Activated B cell treated with CpG ODN at 0.5 μM for 24 hours (primary cell): ENCODE measurements at regions of chr7 and their contacts with region 1.

Region 1: DNA sequence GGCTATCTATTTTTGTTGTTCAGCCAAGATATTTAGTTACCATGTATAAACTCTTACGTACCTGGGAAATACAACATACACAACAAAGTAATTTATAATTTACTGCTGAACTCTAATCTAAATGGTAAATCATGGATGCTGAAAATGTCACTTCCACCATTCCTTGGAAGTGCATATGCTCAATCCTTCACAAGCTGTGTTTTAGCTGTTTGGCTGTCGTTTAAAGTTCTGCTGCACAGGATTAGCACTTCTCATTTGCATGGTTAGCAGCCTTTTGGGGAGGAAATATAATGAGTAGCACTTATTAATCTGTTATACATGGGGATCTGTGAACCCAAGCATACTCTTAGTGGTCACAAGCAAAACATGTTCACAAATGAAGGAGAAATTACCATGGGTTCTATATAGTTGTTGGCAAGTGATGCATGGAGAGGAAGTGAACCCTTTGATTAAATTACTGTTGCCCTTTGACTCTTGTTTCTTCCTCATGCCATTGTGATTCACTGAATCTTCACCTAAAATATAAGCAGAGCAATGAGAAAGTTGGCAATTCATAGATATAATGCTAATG is 18.5 kb downstream of the PIK3CG start:
- DNase-seq: no peak
- ATAC-seq: peak; percentile 95
- H3K4me3 Mint-ChIP-seq: peak overlapping the region; percentile 58
- H3K27ac Mint-ChIP-seq: peak overlapping the region; percentile 61
- H3K4me1 Mint-ChIP-seq: peaks cover 45% of the 10 kb centered on the region
- H3K27me3 Mint-ChIP-seq: no peaks in the 10 kb centered on the region
- CTCF ChIP-seq: no peak

Region 2: DNA sequence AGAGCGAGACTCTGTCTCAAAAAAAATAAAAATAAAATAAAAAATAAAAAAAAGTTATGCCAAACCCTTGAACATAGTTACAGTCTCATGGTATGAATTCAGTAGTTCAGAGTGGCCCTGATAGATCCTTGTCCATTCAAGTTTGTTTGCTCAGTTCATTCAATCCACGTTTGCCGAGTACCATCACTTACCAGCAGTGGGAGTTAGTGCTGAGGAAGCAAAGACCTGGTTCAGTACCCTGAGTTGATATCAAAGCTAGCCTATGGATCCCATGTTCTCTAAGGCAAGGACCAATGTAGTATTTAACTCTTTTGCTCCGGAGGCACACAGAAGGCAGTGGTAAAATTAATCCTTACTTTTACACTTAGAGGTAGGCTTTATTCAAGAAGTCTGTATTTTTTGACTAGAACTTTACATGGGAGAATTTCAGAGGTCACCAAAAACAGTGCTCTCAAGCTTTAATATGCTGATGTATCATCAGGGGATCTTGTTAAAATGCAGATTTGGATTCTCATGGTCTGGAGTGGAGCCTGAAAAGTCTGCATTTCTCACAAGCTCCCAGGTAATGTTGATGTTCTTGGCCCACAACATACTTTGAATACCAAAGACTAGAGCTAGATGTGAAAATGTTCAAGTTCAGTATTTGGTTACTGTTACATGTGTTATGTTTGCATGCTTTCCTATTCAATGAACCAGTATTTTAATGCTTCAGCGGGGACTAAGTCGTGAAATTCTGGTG is 247.1 kb after region 1 on chr7:
- CTCF ChIA-PET with region 1: no interaction called
- POLR2A ChIA-PET with region 1: interaction called, 13 read pairs
- intact Hi-C with region 1: no loop called
- DNase-seq: no peak
- ATAC-seq: no peak
- H3K4me3 Mint-ChIP-seq: no peak overlapping the region
- H3K27ac Mint-ChIP-seq: no peak overlapping the region
- H3K4me1 Mint-ChIP-seq: peaks cover 11% of the 10 kb centered on the region
- H3K27me3 Mint-ChIP-seq: no peaks in the 10 kb centered on the region
- CTCF ChIP-seq: no peak

Region 3: GRCh38 chr7:107711301-107711700 is 827.8 kb after region 1 on chr7:
- CTCF ChIA-PET with region 1: no interaction called
- POLR2A ChIA-PET with region 1: no interaction called
- intact Hi-C with region 1: no loop called
- DNase-seq: no peak
- ATAC-seq: no peak
- H3K4me3 Mint-ChIP-seq: no peak overlapping the region
- H3K27ac Mint-ChIP-seq: no peak overlapping the region
- H3K4me1 Mint-ChIP-seq: no peaks in the 10 kb centered on the region
- H3K27me3 Mint-ChIP-seq: no peaks in the 10 kb centered on the region
- CTCF ChIP-seq: no peak